HEK293 (cell line): ENCODE measurements at regions of chr10 and their contacts with region 1.

Region 1: GRCh38 chr10:95841661-95842498 is 65.9 kb upstream of the CC2D2B start:
- H3K4me3 ChIP-seq: no peak overlapping the region
- H3K27ac ChIP-seq: no peak overlapping the region
- H3K4me1 ChIP-seq: no peaks in the 10 kb centered on the region
- CTCF ChIP-seq: no peak

Region 2: DNA sequence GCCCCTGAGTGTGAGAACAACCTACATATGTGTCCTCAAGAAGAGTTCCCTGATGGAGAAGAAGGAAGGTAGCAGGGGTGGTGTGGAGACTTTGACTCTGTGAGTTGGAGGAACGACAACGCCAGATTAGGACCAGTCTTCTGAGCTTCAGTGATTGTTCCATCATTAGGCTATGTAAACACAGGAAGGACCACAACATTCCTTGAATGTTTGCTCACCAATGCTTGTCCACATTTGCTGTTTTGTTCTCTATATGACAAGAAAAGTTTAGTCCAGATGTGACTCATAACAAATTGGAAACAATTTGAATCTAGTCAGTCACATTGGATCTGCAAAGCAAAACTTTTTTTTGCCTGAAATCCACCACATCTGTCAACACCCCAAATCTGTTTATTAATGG is 23.2 kb before region 1 on chr10:
- CTCF ChIA-PET with region 1: interaction called, 14 read pairs
- POLR2A ChIA-PET with region 1: no interaction called
- H3K4me3 ChIP-seq: no peak overlapping the region
- H3K27ac ChIP-seq: no peak overlapping the region
- H3K4me1 ChIP-seq: no peaks in the 10 kb centered on the region; the same call in 1 of the 2 replicates
- CTCF ChIP-seq: no peak

Region 3: GRCh38 chr10:95877881-95878280 is 36.0 kb after region 1 on chr10:
- CTCF ChIA-PET with region 1: no interaction called
- POLR2A ChIA-PET with region 1: no interaction called
- H3K4me3 ChIP-seq: no peak overlapping the region
- H3K27ac ChIP-seq: no peak overlapping the region
- H3K4me1 ChIP-seq: no peaks in the 10 kb centered on the region
- CTCF ChIP-seq: no peak

Region 4: GRCh38 chr10:95976362-95977229 is 134.7 kb after region 1 on chr10:
- CTCF ChIA-PET with region 1: no interaction called
- POLR2A ChIA-PET with region 1: no interaction called
- H3K4me3 ChIP-seq: no peak overlapping the region
- H3K27ac ChIP-seq: no peak overlapping the region
- H3K4me1 ChIP-seq: no peaks in the 10 kb centered on the region
- CTCF ChIP-seq: no peak